AG04450 (cell line): ENCODE measurements at regions of chr9 and their contacts with region 1.

Region 1: DNA sequence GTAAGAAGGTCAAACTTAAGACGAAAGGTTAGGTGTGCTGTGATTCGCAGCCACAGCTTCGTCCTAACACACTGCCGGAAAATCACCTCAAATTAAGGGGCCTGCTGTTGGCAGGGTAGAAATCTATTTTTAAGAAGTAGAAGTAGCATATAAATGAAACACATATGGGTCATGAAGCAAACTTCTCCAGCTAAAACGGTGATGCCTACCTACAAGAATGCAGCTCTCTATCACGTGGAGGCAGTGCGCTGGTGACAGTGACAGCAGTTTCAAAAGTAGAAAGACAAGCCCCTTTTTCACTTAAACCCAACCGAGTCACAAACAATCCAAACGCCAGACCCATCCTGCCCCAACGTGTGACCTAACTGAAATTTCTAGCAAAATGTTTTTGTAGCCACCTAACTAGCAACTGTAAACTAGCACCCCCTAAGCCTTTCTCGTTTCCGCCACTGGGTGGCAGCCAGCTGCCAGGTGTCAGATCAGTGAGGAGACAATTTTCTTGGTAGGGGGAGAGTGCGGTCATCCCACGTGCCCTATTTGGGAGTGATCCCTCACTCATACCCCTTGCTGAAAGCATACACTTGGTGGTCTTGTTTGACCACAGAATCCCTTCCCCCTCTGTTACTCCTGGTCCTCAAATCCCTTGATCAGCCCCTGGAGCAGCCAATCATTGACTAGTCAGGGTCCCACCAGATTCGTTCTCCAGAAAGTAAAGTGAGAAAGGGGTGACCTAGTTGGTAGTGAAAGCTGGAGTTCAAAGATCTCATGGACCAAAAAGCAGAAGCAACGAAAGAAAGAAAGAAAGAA is 71.8 kb upstream of the MAMDC2 start:
- DNase-seq: no peak
- H3K4me3 ChIP-seq: no peak overlapping the region
- H3K27ac ChIP-seq: no peak overlapping the region
- H3K27me3 ChIP-seq: no peaks in the 10 kb centered on the region
- CTCF ChIP-seq: peak; percentile 95

Region 2: DNA sequence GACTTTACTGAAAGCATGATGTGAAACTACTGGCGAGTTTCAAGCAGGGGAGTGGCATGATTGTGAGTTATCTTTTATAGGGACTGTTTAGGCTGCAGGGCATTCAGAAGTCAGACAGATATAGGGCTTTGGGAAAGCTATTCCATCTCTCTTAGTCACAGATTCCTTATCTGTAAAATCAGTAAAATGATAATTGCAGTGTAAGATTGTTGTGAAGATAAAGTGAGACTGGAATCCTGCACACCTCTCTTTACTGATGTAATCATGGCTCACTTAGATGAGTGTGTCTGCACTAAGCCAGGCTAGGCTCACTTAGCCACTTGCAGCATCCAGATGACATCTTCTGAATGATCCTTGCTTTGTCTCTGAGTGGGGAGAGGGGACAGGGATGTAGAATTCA is 10.0 kb before region 1 on chr9:
- CTCF ChIA-PET with region 1: interaction called, 19 read pairs
- POLR2A ChIA-PET with region 1: no interaction called
- DNase-seq: no peak
- H3K4me3 ChIP-seq: no peak overlapping the region
- H3K27ac ChIP-seq: no peak overlapping the region
- H3K27me3 ChIP-seq: no peaks in the 10 kb centered on the region
- CTCF ChIP-seq: no peak

Region 3: GRCh38 chr9:69981686-69982450 is 10.0 kb after region 1 on chr9:
- CTCF ChIA-PET with region 1: interaction called, 10 read pairs
- POLR2A ChIA-PET with region 1: no interaction called
- DNase-seq: no peak
- H3K4me3 ChIP-seq: no peak overlapping the region
- H3K27ac ChIP-seq: no peak overlapping the region
- H3K27me3 ChIP-seq: no peaks in the 10 kb centered on the region
- CTCF ChIP-seq: no peak

Region 4: GRCh38 chr9:70044490-70045307 is 72.9 kb after region 1 on chr9:
- CTCF ChIA-PET with region 1: interaction called, 10 read pairs
- POLR2A ChIA-PET with region 1: no interaction called
- DNase-seq: no peak
- H3K4me3 ChIP-seq: peak overlapping the region; percentile 65
- H3K27ac ChIP-seq: no peak overlapping the region
- H3K27me3 ChIP-seq: no peaks in the 10 kb centered on the region
- CTCF ChIP-seq: no peak

Region 5: DNA sequence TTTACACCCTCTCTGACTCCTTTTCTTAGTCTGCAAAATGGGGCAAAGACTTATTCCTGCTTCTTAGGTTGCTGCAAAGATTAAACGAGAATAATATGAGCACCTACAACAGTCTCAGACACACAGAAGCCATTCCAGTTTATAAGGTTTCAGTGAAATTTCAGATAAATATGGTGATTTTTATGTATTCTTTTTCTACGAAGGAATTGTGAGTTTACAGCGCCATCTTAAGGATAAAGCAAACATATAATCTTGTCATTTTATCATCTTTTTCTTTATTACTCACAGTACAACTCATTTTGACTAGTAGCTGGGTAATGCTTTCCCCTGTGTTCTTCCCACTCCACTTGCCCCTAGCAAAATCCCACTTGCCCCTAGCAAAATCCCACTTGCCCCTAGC is 257.7 kb after region 1 on chr9:
- CTCF ChIA-PET with region 1: interaction called, 13 read pairs
- POLR2A ChIA-PET with region 1: no interaction called
- DNase-seq: no peak
- H3K4me3 ChIP-seq: no peak overlapping the region
- H3K27ac ChIP-seq: no peak overlapping the region
- H3K27me3 ChIP-seq: no peaks in the 10 kb centered on the region
- CTCF ChIP-seq: peak; percentile 44